Activated CD8-positive, alpha-beta T cell treated with anti-CD3 and anti-CD28 coated beads for 36 hours (primary cell): ENCODE measurements at regions of chr9 and their contacts with region 1.

Region 1: DNA sequence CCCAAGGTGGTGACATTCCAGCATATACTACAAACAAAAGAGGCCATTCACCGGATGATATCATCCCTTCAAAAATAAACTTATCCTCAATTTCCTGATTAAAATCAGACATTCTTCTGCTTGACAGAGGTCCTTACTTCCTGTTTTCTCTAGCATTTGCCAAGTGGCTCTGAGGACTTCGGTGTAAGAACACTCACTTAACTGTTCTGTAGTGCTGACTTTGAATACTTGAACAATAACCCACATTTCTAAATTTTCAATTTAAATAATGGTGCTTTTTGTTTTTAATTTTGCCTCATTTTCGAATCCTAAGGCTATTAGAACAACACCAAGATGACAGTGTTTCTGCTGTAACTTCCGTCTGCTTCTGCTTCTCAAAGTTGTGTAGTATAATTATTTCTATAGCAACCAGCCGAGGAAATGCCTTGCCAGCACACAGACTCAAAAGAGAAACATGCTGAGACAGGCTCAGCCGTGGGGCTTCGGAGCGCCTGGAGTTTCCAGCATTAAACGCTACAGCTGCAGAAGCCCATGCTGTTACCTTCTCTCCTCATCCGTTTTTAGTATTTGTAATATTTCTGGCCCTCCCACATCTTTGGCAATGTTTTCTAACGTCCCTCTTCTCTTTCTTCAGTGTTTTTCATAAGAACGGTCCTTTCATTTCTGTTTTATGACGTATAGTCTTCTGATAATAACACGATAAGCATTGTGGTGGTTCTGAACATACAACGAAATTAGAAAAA is 19.5 kb upstream of the ANXA1 start:
- DNase-seq: peak; percentile 81
- ATAC-seq: peak; percentile 93
- H3K4me3 Mint-ChIP-seq: peak overlapping the region; percentile 78
- H3K27ac Mint-ChIP-seq: peak overlapping the region; percentile 93
- H3K4me1 Mint-ChIP-seq: peaks cover 37% of the 10 kb centered on the region
- H3K27me3 Mint-ChIP-seq: no peaks in the 10 kb centered on the region
- CTCF ChIP-seq: no peak

Region 2: DNA sequence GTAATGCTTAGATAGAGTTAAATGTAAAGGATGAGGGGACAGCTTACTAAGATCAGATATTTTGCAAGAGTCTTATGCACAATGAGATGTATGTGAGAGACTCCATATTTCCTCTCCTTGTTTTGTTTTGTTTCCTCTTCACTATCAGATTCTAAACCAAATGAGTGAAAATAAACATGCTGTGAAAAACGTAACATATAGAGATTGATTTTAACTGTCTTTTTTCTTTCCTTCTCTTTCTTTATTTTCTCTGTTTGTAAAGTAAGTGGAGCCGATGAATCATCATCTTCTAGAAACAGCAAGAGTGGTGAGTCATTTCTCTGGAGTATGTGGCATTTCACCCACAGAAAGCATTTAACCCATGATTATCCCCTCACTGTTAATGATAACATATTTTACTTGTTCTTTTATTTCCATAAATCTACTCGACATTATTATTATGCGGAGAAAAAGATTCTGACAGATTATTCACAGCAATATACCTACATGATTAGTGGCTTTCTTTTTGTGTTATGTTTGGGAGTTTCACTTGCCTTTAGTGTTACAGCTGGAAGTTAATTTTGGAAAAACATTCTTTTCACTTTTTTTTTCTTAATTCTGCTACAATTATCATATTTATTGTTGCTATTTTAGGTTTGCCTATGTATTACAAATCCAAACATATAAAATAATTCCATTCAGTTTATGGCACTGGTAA is 17.3 kb after region 1 on chr9:
- CTCF ChIA-PET with region 1: interaction called, 11 read pairs
- POLR2A ChIA-PET with region 1: interaction called, 5 read pairs
- intact Hi-C with region 1: loop called (anchors 1 kb)
- DNase-seq: peak; percentile 42
- ATAC-seq: peak; percentile 64
- H3K4me3 Mint-ChIP-seq: peak overlapping the region; percentile 50
- H3K27ac Mint-ChIP-seq: peak overlapping the region; percentile 94
- H3K4me1 Mint-ChIP-seq: peaks cover 71% of the 10 kb centered on the region
- H3K27me3 Mint-ChIP-seq: no peaks in the 10 kb centered on the region
- CTCF ChIP-seq: no peak